ENCODE measurements at regions of chr16 and their contacts with region 1.

Region 1: DNA sequence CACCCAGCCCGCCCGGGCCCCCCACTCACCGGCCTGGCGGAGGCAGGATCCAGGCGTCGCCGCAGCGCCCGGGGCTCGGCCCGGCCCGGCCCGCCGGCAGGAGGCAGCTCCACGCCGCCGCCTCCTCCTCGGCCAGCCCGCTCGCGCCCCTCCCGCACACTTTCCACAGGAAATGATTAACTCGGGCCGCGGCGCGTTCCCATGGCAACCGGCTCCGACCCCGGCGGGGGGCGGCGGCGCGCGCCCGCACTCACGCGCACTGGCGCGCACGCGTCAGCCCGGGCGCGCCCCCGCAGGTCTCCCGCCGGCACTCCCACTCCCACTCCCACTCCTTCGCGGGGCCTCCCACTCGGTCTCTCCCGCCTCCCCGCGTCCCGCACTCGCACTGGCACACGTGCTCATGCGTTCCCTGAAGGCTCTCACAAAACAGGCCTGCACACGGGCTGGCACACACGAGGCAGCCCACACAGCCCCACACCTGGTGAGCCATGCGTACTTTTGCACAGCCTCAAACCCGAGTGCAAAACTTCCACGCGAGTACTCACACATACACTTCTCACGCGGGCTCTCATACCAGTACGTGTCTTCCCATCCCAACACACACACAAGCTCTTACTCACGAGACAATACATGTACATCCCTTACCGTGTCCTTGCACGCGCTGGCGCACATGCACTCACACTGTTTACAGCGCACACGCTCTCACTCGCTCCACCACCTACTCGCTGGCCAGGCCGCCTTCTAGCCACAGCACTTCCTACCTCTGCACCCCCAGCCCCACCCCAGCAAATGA is at the start of gene KIFC3:
- DNase-seq: peak; percentile 92
- total RNA-seq, gene KIFC3: 70.1 TPM

Region 2: GRCh38 chr16:57757326-57757786 is 45.2 kb before region 1 on chr16:
- intact Hi-C with region 1: loop called (anchors 5 kb)
- DNase-seq: peak; percentile 97

Region 3: GRCh38 chr16:57786632-57787518 is 15.7 kb before region 1 on chr16:
- intact Hi-C with region 1: loop called (anchors 2 kb)
- DNase-seq: peak; percentile 92

Region 4: GRCh38 chr16:57826706-57827625 is 24.4 kb after region 1 on chr16:
- intact Hi-C with region 1: loop called (anchors 1 kb)
- DNase-seq: no peak

Region 5: DNA sequence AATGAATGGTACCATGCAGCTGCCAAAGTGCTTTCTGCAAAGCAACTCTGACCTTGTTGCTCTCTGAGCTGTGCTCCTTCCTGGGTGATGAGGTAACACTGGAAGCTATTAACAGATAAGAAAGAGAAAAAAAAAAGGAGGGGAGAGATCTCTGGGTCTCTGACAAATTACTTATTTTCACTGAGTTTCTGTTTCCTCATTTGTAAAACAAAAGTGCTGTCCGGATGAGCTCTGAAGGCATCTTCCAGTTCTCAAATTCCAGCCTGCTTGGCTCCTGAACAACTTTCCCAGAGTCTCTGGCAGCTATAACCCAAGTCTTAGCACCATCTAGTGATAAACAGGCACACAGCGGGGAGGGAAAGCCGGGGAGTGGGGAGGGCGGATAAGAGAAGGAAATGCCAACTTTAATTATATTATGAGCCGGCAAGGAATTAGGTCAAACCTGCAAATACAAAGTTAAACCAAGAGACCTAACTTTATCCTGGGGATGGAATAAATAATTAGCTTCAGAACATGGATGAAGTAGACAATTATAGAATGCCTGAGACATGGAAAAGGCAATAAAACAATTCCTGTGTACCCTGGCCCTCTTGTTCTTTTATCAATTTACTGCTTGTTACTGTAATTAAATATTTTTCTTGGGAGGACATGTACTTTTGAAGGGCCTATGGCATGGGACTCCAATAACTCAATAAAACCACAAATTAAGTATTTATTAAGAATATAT is 61.1 kb after region 1 on chr16:
- intact Hi-C with region 1: loop called (anchors 2 kb)
- DNase-seq: no peak

Region 6: DNA sequence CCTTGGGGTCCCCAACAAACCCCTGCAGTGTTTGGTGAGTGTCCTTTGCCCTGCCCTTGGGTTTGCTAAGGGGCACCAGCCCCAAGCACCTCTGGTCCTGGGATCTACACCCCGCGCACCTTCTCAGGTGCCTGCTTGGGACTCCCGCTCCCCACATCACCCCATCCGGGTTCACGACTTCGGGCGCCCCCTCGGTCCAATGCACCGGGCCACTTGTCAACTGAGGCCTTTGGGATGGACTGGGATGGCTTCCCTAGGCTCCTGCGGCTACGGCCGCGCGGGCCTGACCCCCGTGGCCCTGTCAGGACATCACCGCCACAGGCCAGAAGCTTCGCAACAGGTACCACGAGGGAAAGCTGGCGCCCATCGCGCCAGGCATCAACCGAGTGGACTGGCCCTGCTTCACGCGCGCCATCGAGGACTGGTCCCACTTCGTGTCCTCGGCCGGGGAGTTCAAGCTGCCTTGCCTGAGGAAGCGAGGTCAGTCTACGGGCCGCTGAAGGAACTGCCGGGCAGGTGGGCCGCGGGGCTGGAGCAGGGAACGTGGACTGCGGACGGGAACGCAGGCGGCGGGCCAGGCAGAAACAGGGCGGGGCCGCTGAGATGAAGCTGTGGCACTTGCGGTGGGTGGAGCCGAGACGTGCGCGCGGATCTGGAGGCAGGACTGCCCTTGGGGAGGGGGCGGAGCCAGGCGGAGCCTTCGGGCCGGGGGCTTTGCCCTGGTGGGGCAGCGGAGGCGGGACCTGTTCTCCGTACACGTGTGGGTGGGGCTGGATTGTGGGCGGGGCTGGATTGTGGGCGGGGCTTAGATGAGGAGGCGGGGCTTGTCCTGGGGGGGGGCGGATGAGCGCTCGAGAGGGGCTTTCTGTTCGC is 182.0 kb after region 1 on chr16:
- intact Hi-C with region 1: loop called (anchors 10 kb)
- DNase-seq: peak; percentile 93

Measured in cardiac septum (tissue), 1 donor.